ENCODE measurements at regions of chr12 and their contacts with region 1.

Region 1: DNA sequence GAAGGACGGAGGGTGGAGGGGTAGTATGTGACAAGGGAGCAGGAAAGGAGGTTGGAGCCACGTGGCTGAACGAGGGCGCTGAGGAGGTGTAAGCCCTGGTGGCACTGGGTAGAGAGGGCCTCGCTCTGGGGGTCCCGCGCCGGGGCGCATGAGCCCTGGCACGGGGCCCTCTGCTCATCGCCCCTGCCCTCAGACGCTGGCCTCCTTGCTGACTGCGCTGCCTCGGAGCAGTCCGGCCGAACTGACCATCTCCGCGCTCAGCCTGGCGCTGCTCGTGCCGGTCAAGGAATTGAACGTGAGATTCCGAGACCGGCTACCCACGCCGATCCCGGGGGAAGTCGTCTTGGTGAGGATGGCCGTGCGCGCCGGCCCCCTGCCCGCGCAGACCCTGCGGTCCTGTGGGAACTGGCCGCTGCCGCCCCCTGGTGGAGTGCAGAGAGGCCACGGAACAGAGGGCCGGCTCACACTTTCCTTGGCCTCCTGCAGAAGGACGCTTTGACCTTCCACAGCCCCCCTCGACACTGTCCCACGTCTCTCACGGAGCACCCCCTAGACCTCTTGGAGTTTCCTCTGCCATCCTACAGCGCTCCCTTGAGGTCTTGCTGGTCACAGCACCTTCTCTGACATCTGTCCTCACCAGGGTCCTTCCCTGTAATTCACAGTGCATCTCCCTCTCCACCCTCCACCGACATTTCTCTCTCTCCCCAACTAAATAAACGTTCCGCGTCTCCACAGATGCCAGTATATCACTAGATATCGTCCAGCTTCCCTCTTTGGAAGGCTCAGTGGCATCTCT is 10.5 kb downstream of the ARHGEF25 start:
- DNase-seq: peak; percentile 77
- ATAC-seq: peak; percentile 63
- H3K4me3 Mint-ChIP-seq: peak overlapping the region; percentile 78
- H3K27ac Mint-ChIP-seq: no peak overlapping the region
- H3K4me1 Mint-ChIP-seq: peaks cover 25% of the 10 kb centered on the region
- H3K27me3 Mint-ChIP-seq: peaks cover 100% of the 10 kb centered on the region
- CTCF ChIP-seq: peak; percentile 88

Region 2: DNA sequence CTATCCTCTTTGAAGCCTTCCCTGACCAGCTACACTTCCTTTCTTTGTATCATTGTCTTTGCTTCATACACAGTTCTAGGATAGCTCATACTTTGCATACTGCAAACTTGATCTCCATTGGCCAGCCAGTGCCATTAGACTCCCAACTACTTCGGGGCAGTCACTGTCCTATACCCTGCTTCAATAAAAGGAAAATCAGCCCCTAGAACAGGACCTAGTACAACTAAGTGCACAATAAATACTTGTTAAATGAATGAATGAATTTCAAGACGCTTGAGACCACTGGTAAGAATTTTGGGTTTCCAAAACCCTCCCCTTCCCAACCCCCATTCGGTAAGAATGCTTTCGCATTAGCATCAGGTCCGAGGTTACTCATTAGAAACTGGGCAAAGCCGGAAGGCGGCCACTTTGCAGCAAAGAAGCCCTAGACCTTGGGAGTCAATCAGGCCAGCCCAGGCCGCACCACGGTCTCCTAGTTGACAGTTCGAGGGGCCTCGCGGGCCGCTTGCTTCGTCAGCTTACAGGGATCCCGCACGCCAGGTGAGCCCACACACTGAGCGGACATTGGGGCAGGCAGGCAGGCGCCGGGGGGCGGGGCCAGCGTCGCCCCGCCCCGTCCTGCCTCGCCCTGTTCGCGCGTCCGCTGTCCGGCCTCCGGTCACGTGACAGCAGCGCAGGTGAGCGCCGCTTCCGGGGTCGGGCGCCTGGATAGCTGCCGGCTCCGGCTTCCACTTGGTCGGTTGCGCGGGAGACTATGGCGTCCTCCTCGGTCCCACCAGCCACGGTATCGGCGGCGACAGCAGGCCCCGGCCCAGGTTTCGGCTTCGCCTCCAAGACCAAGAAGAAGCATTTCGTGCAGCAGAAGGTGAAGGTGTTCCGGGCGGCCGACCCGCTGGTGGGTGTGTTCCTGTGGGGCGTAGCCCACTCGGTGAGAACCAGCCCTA is 30.9 kb before region 1 on chr12 and contains the start of gene PIP4K2C:
- CTCF ChIA-PET with region 1: interaction called, 74 read pairs
- POLR2A ChIA-PET with region 1: interaction called, 3 read pairs
- DNase-seq: peak; percentile 91
- ATAC-seq: peak; percentile 98
- H3K4me3 Mint-ChIP-seq: peak within 1 kb of the TSS; percentile 89
- H3K27ac Mint-ChIP-seq: peak within 1 kb of the TSS; percentile 72
- H3K4me1 Mint-ChIP-seq: peaks cover 14% of the 10 kb centered on the region
- H3K27me3 Mint-ChIP-seq: peaks cover 3% of the 10 kb centered on the region; the same call in 1 of the 2 replicates
- CTCF ChIP-seq: no peak
- total RNA-seq, gene PIP4K2C: 25.4 to 26.9 TPM (median 25.8 TPM) in 3 replicates

Region 3: GRCh38 chr12:57604454-57604991 is 17.2 kb before region 1 on chr12 and contains the start of gene DTX3:
- CTCF ChIA-PET with region 1: interaction called, 31 read pairs
- POLR2A ChIA-PET with region 1: no interaction called
- DNase-seq: peak; percentile 52
- ATAC-seq: peak; percentile 23
- H3K4me3 Mint-ChIP-seq: peak within 1 kb of the TSS; percentile 85
- H3K27ac Mint-ChIP-seq: peak within 1 kb of the TSS; percentile 93
- H3K4me1 Mint-ChIP-seq: peaks cover 32% of the 10 kb centered on the region
- H3K27me3 Mint-ChIP-seq: no peaks in the 10 kb centered on the region
- CTCF ChIP-seq: no peak
- total RNA-seq, gene DTX3: 52.4 to 57.0 TPM (median 55.7 TPM) in 3 replicates

Region 4: GRCh38 chr12:57611108-57611809 is 10.4 kb before region 1 on chr12 and contains the start of gene ARHGEF25:
- CTCF ChIA-PET with region 1: interaction called, 31 read pairs
- POLR2A ChIA-PET with region 1: interaction called, 11 read pairs
- DNase-seq: peak; percentile 73
- ATAC-seq: peak; percentile 67
- H3K4me3 Mint-ChIP-seq: peak within 1 kb of the TSS; percentile 87
- H3K27ac Mint-ChIP-seq: no peak within 1 kb of the TSS
- H3K4me1 Mint-ChIP-seq: peaks cover 36% of the 10 kb centered on the region
- H3K27me3 Mint-ChIP-seq: peaks cover 53% of the 10 kb centered on the region
- CTCF ChIP-seq: no peak
- total RNA-seq, gene ARHGEF25: 11.9 to 19.0 TPM (median 17.2 TPM) in 3 replicates

Region 5: DNA sequence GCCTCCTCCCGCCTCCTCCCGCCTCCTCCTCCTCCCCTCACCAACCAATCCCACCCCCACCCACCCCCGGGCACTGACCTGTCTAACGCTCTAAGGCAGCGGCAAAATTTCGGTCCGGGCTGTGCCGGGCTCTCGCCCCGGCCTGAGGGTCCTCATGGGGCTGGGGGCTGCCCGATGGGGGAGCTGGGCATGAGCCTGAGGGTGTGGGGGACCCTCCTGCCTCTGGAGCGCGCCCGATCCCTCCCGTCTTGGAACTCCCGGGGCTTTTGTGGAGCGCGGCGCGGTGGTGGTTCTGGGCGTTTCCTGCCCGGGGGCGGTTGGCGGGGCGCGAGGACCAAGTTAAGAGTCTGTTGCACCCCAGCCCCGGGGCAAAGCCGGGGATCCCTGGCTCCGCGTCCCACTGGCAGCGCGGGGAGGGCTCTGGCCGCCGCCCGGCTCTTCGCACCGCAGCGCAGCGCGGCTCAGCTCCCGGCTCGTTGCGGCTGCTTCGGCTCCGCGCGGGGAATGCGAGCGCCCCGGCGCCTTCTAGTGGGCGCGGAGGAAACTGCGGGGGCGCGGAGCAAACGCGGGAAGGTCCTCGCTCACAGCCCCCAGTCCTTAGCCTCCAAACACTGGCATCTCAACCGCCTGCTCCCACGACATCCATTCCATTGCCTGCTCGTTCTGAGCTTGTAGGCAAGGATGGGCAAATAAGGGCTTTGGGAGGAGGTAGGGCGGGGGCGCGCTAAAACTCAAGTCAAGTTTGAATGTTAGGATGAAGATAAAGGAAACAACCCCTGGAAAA is 11.2 kb after region 1 on chr12 and contains the start of gene B4GALNT1:
- CTCF ChIA-PET with region 1: interaction called, 36 read pairs
- POLR2A ChIA-PET with region 1: interaction called, 3 read pairs
- DNase-seq: peak; percentile 77
- ATAC-seq: peak; percentile 85
- H3K4me3 Mint-ChIP-seq: peak within 1 kb of the TSS; percentile 74
- H3K27ac Mint-ChIP-seq: no peak within 1 kb of the TSS
- H3K4me1 Mint-ChIP-seq: peaks cover 15% of the 10 kb centered on the region
- H3K27me3 Mint-ChIP-seq: peaks cover 80% of the 10 kb centered on the region
- CTCF ChIP-seq: peak; percentile 73
- total RNA-seq, gene B4GALNT1: 0.46 to 1.2 TPM (median 1.2 TPM) in 3 replicates